Psoas muscle (tissue), 8 donors: ENCODE measurements at regions of chr7 and their contacts with region 1.

Region 1: DNA sequence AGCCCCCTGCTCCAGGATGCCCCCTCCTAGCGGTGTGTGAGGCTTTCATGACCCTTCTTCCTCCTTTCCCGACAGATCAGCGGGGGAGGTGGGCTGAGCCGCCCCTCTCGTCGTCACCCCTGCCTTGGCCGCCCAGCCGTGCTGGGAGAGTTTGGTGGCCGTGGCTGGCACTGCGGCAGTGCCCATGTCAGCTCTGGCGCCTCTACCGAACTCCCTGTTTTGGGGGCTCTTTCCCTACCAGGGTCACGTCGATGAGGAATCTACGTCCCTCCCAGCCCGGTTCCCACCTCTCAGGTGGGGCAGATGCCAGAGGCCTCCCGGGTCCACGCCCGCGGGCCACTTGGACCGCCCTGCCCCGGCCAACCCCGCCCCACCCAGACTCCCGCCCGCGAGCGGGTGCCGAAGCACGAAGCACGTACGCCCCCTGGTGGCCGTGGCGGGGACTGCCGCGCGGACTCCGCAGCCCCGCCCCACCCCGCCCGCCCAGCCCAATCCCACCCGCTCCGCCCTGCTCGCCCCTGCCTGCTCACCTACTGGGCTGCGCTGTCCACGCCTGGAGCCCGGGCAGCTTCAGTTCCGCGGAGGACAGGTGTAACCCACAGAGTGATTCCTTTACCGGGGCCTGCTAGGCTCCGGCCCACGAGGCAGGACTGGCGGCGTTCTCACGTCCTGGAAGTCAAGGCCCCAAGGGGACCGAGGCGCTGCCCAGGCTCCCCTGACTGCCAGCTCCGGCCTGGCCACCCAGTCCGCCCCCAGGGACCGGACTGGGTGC is 127.1 kb downstream of the UBE2H start:
- DNase-seq: peak; percentile 88 to 94
- ATAC-seq: peak; percentile 80 to 87 (median 84)
- H3K4me3 ChIP-seq: peak overlapping the region; percentile 73
- H3K27ac ChIP-seq: peak overlapping the region; percentile 76
- H3K4me1 ChIP-seq: peaks cover 17% of the 10 kb centered on the region
- H3K27me3 ChIP-seq: no peaks in the 10 kb centered on the region
- CTCF ChIP-seq: peak; percentile 99

Region 2: GRCh38 chr7:129343099-129343700 is 482.5 kb before region 1 on chr7:
- intact Hi-C with region 1: loop called in 1 of 2 experiments (anchors 10 kb)
- DNase-seq: no peak
- ATAC-seq: peak; percentile 57 to 84 (median 70)
- H3K4me3 ChIP-seq: no peak overlapping the region
- H3K27ac ChIP-seq: no peak overlapping the region
- H3K4me1 ChIP-seq: peaks cover 34% of the 10 kb centered on the region
- H3K27me3 ChIP-seq: no peaks in the 10 kb centered on the region
- CTCF ChIP-seq: peak; percentile 79

Region 3: GRCh38 chr7:129611246-129612111 is 214.2 kb before region 1 on chr7 and contains the start of gene NRF1:
- intact Hi-C with region 1: loop called in 1 of 2 experiments (anchors 5 kb)
- DNase-seq: peak; percentile 92 to 96
- ATAC-seq: peak; percentile 96 to 99 (median 97)
- H3K4me3 ChIP-seq: peak within 1 kb of the TSS; percentile 96
- H3K27ac ChIP-seq: peak within 1 kb of the TSS; percentile 97
- H3K4me1 ChIP-seq: peaks cover 27% of the 10 kb centered on the region
- H3K27me3 ChIP-seq: no peaks in the 10 kb centered on the region
- CTCF ChIP-seq: peak; percentile 23
- total RNA-seq, gene NRF1: 10.0 to 13.7 (median 10.7) TPM

Region 4: GRCh38 chr7:129664029-129665012 is 161.4 kb before region 1 on chr7:
- intact Hi-C with region 1: loop called (anchors 1 to 5 kb)
- DNase-seq: no peak
- ATAC-seq: peak; percentile 55 to 67 (median 64)
- H3K4me3 ChIP-seq: no peak overlapping the region
- H3K27ac ChIP-seq: no peak overlapping the region
- H3K4me1 ChIP-seq: no peaks in the 10 kb centered on the region
- H3K27me3 ChIP-seq: no peaks in the 10 kb centered on the region
- CTCF ChIP-seq: peak; percentile 54

Region 5: GRCh38 chr7:129739427-129739826 is 86.3 kb before region 1 on chr7:
- intact Hi-C with region 1: loop called (anchors 5 to 10 kb)
- DNase-seq: peak; percentile 25 to 69
- ATAC-seq: peak; percentile 88 to 92 (median 90)
- H3K4me3 ChIP-seq: no peak overlapping the region
- H3K27ac ChIP-seq: peak overlapping the region; percentile 86
- H3K4me1 ChIP-seq: peaks cover 42% of the 10 kb centered on the region
- H3K27me3 ChIP-seq: no peaks in the 10 kb centered on the region
- CTCF ChIP-seq: no peak

Region 6: GRCh38 chr7:129906700-129907099 is 81.0 kb after region 1 on chr7:
- intact Hi-C with region 1: no loop called
- DNase-seq: no peak
- ATAC-seq: peak in 2 of 4 donors; percentile 39 to 48
- H3K4me3 ChIP-seq: no peak overlapping the region
- H3K27ac ChIP-seq: peak overlapping the region; percentile 38
- H3K4me1 ChIP-seq: peaks cover 73% of the 10 kb centered on the region
- H3K27me3 ChIP-seq: no peaks in the 10 kb centered on the region
- CTCF ChIP-seq: no peak

Region 7: DNA sequence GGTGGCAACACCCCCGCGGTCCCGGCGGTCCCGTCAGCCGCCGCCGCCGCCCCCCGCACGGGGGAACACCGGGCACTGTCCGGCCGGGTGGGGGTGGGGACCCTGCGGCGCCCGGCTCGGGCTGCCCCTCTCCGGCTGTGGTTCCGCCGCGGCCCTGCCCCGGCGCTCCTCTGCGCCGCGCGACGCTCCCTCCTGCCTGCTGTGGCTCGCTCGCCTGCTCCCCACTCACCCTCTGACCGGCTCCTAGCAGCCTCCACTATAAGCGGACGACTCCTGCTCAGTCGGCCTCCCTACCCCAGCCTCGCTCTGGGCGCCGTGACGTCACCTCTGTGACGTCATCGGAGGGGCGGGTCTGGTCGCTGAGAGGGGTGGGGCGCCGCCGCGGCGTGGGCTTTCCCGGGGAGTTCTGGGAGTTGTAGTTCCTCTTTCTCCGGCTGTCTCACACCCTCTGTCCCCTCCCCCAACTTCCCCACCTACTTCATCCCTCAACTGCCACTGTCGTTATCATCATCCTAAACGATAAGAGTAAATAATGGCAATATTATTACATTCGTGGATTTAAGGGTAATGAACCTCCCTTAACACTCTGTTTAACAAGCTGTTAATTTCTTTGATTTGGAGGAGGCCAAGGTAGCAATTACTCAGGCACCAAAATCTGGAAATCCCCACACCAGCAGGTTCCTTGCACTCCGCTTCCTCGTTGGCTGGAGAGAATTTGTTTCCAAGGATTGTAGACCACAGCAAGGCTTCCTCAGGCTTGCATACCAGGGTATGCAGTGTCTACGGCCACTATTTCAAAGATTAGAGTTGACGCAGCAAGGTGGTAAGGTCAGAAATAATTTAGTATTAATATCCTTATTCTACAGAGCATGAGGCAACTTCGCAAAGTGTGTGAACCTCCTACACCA is 127.2 kb after region 1 on chr7 and contains the start of gene UBE2H:
- intact Hi-C with region 1: loop called in 1 of 2 experiments (anchors 5 kb)
- DNase-seq: peak; percentile 92 to 96
- ATAC-seq: peak; percentile 83 to 91 (median 86)
- H3K4me3 ChIP-seq: peak within 1 kb of the TSS; percentile 97
- H3K27ac ChIP-seq: peak within 1 kb of the TSS; percentile 98
- H3K4me1 ChIP-seq: peaks cover 12% of the 10 kb centered on the region
- H3K27me3 ChIP-seq: no peaks in the 10 kb centered on the region
- CTCF ChIP-seq: no peak
- total RNA-seq, gene UBE2H: 75.9 to 111 (median 77.4) TPM

Region 8: DNA sequence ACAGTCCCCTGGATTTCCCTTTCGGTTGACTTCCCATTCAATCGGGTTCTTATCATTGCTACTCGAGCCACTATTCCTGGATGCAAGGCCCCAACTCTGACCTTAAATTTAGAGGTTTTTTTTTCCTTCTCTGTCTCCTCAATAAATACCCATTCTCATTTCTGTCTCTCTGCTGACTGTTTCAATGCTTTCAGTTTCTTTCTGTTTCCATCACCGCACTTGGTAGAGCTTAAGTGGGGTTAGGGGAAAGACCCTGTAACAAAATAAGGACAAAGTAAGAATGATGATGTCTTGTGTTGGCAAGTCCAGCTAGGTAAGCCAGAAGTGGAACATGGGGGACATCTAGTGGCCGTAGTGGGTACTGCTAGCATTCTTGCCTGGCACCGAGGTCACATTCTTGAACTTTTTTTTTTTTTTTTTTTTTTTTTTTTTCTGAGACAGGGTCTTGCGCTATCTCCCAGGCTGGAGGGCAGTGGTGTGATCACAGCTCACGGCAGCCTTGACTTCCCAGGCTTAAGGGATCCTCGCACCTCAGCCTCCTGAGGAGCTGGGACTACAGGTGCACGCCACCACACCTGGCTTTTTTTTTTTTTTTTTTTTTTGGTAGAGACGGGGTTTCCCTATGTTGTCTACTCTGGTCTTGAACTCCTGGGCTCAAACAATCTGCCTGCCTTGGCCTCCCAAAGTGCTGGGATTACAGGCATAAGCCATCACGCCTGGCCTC is 185.2 kb after region 1 on chr7:
- intact Hi-C with region 1: loop called (anchors 2 to 5 kb)
- DNase-seq: peak; percentile 71 to 86
- ATAC-seq: peak; percentile 70 to 84 (median 77)
- H3K4me3 ChIP-seq: no peak overlapping the region
- H3K27ac ChIP-seq: peak overlapping the region; percentile 85
- H3K4me1 ChIP-seq: peaks cover 28% of the 10 kb centered on the region
- H3K27me3 ChIP-seq: no peaks in the 10 kb centered on the region
- CTCF ChIP-seq: peak; percentile 91